GM10248 (cell line): ENCODE measurements at regions of chr11 and their contacts with region 1.

Region 1: GRCh38 chr11:93741094-93741881 is at the starts of genes C11orf54 and TAF1D:
- DNase-seq: peak; percentile 94
- CTCF ChIP-seq: no peak

Region 2: DNA sequence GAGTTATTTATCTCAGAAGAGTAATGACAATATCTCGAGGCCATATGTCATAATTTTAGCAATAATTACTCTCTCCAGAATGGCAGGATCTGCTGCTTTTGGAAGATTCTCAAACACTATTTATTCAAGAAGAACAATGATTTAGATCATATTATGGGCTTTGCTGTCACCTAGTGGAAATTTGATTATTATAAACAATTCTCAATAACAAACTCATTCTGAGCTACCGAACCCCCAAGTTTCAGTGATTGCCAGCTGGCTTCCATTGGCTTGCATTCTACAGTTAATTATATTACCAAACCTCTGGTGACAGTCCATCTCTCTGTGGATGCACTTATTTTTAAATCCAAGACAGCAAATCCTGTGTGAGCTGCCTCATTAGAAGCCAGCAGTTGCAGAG is 515.6 kb before region 1 on chr11:
- CTCF ChIA-PET with region 1: no interaction called
- POLR2A ChIA-PET with region 1: interaction called, 10 read pairs
- DNase-seq: peak; percentile 17
- CTCF ChIP-seq: peak; percentile 10

Region 3: DNA sequence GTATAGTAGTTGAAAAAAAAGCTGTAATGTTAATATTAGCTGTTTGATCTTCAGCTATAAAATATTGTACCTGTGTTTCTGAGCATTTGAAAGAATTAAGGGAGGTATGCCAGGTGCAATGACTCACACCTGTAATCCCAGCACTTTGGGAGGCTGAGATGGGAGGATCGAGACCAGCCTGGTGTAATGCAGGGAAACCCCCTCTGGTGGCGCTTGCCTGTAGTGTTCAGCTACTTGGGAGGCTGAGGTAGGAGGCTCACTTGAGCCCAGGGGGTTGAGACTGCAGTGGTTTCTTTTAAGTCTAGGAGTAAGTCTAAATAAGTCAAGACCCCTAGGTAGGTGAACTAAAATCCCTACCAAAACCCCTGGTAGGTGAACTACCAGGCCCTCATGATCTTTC is 37.1 kb before region 1 on chr11:
- CTCF ChIA-PET with region 1: no interaction called
- POLR2A ChIA-PET with region 1: no interaction called
- DNase-seq: no peak
- CTCF ChIP-seq: no peak

Region 4: DNA sequence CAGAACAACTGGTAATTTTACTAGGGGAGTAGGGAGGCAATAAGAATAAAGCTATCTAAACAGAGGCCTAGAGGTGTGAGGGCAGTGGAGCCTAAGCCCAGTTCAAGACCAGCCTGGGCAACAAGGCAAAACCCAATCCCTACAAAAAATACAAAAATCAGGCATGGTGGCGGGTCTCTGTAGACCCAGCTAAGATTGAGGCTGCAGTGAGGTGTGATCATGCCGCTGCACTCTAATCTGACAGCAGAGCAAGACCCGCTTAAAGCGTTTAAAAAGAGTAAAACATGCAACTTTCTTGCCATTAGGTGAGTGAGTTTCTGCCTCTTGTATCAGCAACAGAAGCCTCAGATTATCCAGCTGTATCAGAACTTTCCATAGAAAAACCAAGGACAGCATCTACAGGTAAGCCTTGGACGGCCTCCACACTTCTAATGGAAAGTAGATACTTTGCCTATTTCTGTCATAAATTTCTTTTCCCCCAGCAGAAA is 12.1 kb before region 1 on chr11:
- CTCF ChIA-PET with region 1: interaction called, 5 read pairs
- POLR2A ChIA-PET with region 1: interaction called, 21 read pairs
- DNase-seq: no peak
- CTCF ChIP-seq: no peak

Region 5: GRCh38 chr11:93784152-93784934 is 43.1 kb after region 1 on chr11 and contains the start of gene MED17:
- CTCF ChIA-PET with region 1: interaction called, 11 read pairs
- POLR2A ChIA-PET with region 1: interaction called, 35 read pairs
- DNase-seq: peak; percentile 93
- CTCF ChIP-seq: peak; percentile 41